Activated CD4-positive, alpha-beta T cell treated with anti-CD3 and anti-CD28 coated beads, Interleukin-2, amount 10 ng/mL, durations not matched to agents 24 days and 14 days (primary cell): ENCODE measurements at regions of chr19 and their contacts with region 1.

Region 1: GRCh38 chr19:42423462-42424344 is 3.5 kb downstream of the LIPE start:
- DNase-seq: peak; percentile 98
- H3K4me3 Mint-ChIP-seq: peak overlapping the region; percentile 91
- H3K27ac Mint-ChIP-seq: peak overlapping the region; percentile 91
- H3K4me1 Mint-ChIP-seq: peaks cover 36% of the 10 kb centered on the region
- H3K27me3 Mint-ChIP-seq: no peaks in the 10 kb centered on the region

Region 2: GRCh38 chr19:42396381-42397262 is 27.1 kb before region 1 on chr19:
- intact Hi-C with region 1: loop called (anchors 2 kb)
- DNase-seq: peak; percentile 99
- H3K4me3 Mint-ChIP-seq: peak overlapping the region; percentile 94
- H3K27ac Mint-ChIP-seq: peak overlapping the region; percentile 91
- H3K4me1 Mint-ChIP-seq: peaks cover 30% of the 10 kb centered on the region
- H3K27me3 Mint-ChIP-seq: peaks cover 8% of the 10 kb centered on the region

Region 3: GRCh38 chr19:42440357-42441048 is 16.8 kb after region 1 on chr19:
- intact Hi-C with region 1: loop called (anchors 2 kb)
- DNase-seq: peak; percentile 94
- H3K4me3 Mint-ChIP-seq: peak overlapping the region; percentile 47
- H3K27ac Mint-ChIP-seq: no peak overlapping the region
- H3K4me1 Mint-ChIP-seq: peaks cover 19% of the 10 kb centered on the region
- H3K27me3 Mint-ChIP-seq: peaks cover 5% of the 10 kb centered on the region

Region 4: GRCh38 chr19:42450314-42450934 is 26.7 kb after region 1 on chr19:
- intact Hi-C with region 1: loop called (anchors 1 kb)
- DNase-seq: peak; percentile 93
- H3K4me3 Mint-ChIP-seq: no peak overlapping the region
- H3K27ac Mint-ChIP-seq: no peak overlapping the region
- H3K4me1 Mint-ChIP-seq: peaks cover 15% of the 10 kb centered on the region
- H3K27me3 Mint-ChIP-seq: peaks cover 2% of the 10 kb centered on the region

Region 5: GRCh38 chr19:42577016-42577415 is 153.3 kb after region 1 on chr19:
- intact Hi-C with region 1: no loop called
- DNase-seq: no peak
- H3K4me3 Mint-ChIP-seq: no peak overlapping the region
- H3K27ac Mint-ChIP-seq: no peak overlapping the region
- H3K4me1 Mint-ChIP-seq: no peaks in the 10 kb centered on the region
- H3K27me3 Mint-ChIP-seq: peaks cover 26% of the 10 kb centered on the region